ENCODE measurements at regions of chr7 and their contacts with region 1.

Region 1: DNA sequence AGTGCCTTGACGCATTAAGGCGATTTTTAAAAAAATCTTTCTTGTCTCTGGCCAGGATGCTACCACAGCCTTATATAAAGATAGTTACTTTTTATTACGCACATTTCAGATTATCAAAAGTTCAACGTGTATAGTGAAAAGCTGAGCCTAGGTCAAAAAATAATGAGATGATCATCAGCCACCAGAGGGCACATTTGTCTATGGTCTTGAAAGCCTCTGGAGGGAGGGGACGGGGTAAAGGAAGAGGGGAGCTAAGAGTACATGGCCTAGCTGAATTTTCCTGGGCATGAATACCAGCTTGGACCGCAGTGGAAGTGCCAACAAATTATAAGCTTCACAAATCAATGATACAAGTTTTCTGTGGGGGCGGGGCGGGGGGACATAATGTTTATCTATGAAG is 285.9 kb upstream of the SMIM30 start:
- DNase-seq: no peak
- ATAC-seq: peak in 3 of 4 donors; percentile 47 to 79 (median 50)
- H3K4me3 ChIP-seq: no peak overlapping the region
- H3K27ac ChIP-seq: no peak overlapping the region
- H3K4me1 ChIP-seq: no peaks in the 10 kb centered on the region
- H3K27me3 ChIP-seq: no peaks in the 10 kb centered on the region
- CTCF ChIP-seq: peak; percentile 40

Region 2: DNA sequence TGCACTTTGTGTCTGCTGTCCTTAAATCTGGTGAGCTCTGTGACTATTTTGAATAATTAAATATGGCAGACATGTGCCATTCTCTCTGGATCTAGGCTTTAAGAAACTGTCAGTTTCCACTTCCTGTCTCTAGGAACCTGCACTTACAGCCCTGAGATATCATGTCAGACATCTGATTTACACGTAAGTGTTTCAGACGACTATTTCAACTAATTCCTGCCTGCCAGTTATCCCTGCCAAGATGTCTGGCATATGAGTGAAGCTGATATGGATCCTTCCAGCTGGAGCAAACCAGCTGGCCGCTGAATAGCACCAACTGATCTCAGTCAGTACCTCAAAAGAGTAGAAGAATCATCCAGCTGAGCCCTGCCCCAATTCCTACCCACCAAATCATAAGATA is 76.3 kb after region 1 on chr7:
- intact Hi-C with region 1: no loop called
- DNase-seq: no peak
- ATAC-seq: no peak
- H3K4me3 ChIP-seq: no peak overlapping the region
- H3K27ac ChIP-seq: no peak overlapping the region
- H3K4me1 ChIP-seq: no peaks in the 10 kb centered on the region
- H3K27me3 ChIP-seq: no peaks in the 10 kb centered on the region
- CTCF ChIP-seq: no peak

Region 3: DNA sequence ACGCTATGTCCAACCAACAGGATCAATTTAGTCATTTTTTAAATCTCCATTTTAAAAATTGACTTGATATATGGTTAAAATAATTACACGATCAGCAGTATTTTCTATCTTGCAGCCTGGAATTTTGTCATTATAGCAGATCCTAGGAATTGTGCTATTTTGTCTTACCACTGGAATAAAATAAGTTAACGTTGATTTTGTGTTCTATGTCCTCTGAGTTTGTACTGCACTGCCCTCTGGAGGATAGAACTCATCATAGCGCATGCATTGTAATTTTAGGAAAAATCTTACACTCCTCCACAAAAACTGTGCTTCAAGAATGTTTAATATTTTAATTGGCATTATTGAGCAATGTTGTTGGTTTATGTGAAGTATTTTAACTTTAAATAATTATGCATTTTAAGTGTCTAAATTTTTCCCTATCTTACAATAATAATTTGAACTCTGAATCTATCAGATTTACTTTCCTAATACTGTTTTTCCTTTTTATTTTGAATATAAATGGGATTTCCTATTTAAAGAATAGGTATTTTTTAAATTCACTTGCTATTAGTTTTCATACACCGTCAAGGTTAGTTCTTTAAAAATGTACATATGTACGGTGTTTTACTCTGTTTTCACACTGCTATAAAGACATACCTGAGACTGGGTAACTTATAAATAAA is 294.4 kb after region 1 on chr7:
- intact Hi-C with region 1: loop called (anchors 2 to 5 kb)
- DNase-seq: no peak
- ATAC-seq: peak in 3 of 4 donors; percentile 42 to 67 (median 53)
- H3K4me3 ChIP-seq: no peak overlapping the region
- H3K27ac ChIP-seq: no peak overlapping the region
- H3K4me1 ChIP-seq: peaks cover 1% of the 10 kb centered on the region
- H3K27me3 ChIP-seq: no peaks in the 10 kb centered on the region
- CTCF ChIP-seq: peak; percentile 81